ENCODE measurements at regions of chr1 and their contacts with region 1.

Region 1: DNA sequence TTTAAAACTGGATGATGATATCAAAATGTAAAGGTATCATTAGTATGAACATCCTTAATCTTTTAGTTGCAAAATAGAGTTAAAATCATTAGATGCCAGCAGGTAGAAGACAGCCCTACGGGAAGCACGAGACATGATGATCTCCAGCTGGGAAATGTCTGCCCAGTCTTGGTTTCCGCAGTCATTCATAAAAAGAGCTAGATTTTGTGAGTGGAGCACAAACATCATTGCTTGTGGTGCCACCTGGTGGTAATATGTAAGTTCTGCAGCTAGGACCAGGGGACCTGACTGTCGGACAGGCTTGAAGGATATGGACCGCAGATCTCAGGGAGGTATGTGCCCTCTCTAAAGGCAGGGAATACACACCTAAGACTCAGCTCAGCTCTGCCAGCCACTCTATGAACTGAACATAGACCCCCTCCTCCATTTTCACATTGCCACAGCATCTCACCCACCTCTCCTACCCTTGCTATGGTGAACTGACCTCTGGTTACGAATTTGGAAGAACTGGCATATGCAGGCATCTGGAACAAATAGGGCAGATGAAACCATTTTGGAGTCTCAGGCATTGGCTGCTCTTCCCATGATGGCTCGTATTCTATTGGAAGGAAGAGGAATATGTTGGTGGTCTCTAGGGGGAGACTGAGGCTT is 9.2 kb downstream of the FCMR start:
- DNase-seq: peak; percentile 51 to 88
- ATAC-seq: peak; percentile 72 to 80 (median 77)
- H3K4me3 ChIP-seq: no peak overlapping the region
- H3K4me3 Mint-ChIP-seq: peak overlapping the region; percentile 25
- H3K27ac ChIP-seq: peak overlapping the region; percentile 40
- H3K27ac Mint-ChIP-seq: peak overlapping the region in 1 of 2 donors; percentile 77
- H3K4me1 ChIP-seq: peaks cover 73% of the 10 kb centered on the region
- H3K4me1 Mint-ChIP-seq: peaks cover 84% of the 10 kb centered on the region in 2 donors
- H3K27me3 ChIP-seq: no peaks in the 10 kb centered on the region
- H3K27me3 Mint-ChIP-seq: no peaks in the 10 kb centered on the region
- CTCF ChIP-seq: peak; percentile 91

Region 2: DNA sequence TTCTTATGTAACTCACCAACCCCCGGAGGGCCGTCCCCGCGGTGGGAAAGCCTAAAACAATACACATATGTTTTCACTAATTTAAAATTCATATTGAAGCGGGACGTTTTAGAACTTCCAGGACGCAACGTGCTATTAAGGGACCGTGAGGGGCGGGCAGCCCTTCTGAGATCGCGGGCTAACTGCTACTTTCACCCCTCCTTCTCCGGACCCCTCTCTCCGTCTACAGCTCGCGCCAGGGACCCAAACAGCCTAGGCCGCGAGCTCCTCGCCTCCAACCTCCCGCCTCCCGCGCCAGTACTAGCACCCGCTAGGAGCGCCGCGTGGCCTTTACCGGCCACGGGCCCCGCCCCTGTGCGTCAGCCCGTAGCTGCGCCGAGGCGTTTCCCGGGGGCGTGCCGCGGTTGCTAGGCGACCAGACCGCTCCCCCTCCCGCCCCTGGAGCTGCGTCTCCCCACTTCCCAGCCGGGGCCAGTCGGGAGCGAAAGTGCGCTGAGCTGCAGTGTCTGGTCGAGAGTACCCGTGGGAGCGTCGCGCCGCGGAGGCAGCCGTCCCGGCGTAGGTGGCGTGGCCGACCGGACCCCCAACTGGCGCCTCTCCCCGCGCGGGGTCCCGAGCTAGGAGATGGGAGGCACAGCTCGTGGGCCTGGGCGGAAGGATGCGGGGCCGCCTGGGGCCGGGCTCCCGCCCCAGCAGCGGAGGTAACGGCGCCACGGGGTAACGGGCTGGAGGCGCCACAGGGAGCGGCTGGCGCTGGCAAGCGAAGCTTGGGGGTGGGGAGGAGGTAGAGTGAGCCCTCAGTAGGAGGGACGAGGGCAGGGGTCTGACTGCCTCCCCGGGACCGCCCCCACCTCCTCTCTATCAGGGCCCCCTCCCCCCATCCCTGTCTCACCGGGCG is 277.2 kb before region 1 on chr1 and contains the start of gene DYRK3:
- intact Hi-C with region 1: loop called (anchors 10 kb)
- DNase-seq: peak; percentile 78 to 94
- ATAC-seq: peak; percentile 94 to 96 (median 95)
- H3K4me3 ChIP-seq: peak within 1 kb of the TSS; percentile 48
- H3K4me3 Mint-ChIP-seq: peak within 1 kb of the TSS; percentile 92
- H3K27ac ChIP-seq: no peak within 1 kb of the TSS
- H3K27ac Mint-ChIP-seq: peak within 1 kb of the TSS; percentile 56 to 79
- H3K4me1 ChIP-seq: peaks cover 17% of the 10 kb centered on the region
- H3K4me1 Mint-ChIP-seq: peaks cover 10 to 21% of the 10 kb centered on the region in 2 donors
- H3K27me3 ChIP-seq: peaks cover 8% of the 10 kb centered on the region
- H3K27me3 Mint-ChIP-seq: peaks cover 20 to 31% of the 10 kb centered on the region in 2 donors
- CTCF ChIP-seq: no peak
- total RNA-seq, gene DYRK3: 0.16 to 0.66 (median 0.43) TPM

Region 3: DNA sequence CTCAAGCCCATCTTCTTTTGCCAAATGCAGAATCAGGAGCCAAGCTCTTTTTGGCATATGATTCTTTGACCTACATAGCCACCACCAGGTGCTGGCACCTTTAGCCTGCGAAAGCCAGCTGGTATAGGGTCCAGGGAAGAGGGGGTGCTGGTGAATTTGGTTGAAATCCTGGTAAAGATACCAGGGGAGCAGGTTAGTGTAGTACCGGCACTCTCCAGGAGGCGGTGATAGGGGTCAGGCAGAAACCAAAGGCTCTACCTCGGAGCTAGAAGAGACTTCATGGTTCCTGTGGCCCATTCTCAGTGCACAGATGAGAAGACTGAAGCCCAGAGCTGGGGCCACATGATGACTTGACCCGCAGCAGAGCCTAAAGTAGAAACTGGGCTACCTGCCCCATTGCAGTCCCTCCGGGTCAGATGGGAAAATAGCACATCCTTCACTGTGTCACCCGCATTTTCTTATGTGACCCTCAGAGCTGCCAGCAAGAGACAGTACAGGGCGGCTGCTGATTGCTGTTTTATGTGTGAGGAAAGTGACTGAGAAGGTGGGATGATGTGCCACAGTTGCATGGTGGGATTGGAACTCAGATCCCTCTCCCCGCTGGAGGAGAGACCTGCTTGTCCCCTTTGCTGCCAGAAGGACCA is 177.9 kb before region 1 on chr1:
- intact Hi-C with region 1: loop called (anchors 1 kb)
- DNase-seq: peak; percentile 74 to 90
- ATAC-seq: peak; percentile 49 to 63 (median 63)
- H3K4me3 ChIP-seq: no peak overlapping the region
- H3K4me3 Mint-ChIP-seq: peak overlapping the region; percentile 17
- H3K27ac ChIP-seq: no peak overlapping the region
- H3K27ac Mint-ChIP-seq: peak overlapping the region; percentile 66 to 92
- H3K4me1 ChIP-seq: peaks cover 66% of the 10 kb centered on the region
- H3K4me1 Mint-ChIP-seq: peaks cover 63 to 68% of the 10 kb centered on the region in 2 donors
- H3K27me3 ChIP-seq: no peaks in the 10 kb centered on the region
- H3K27me3 Mint-ChIP-seq: no peaks in the 10 kb centered on the region
- CTCF ChIP-seq: peak; percentile 84

Region 4: DNA sequence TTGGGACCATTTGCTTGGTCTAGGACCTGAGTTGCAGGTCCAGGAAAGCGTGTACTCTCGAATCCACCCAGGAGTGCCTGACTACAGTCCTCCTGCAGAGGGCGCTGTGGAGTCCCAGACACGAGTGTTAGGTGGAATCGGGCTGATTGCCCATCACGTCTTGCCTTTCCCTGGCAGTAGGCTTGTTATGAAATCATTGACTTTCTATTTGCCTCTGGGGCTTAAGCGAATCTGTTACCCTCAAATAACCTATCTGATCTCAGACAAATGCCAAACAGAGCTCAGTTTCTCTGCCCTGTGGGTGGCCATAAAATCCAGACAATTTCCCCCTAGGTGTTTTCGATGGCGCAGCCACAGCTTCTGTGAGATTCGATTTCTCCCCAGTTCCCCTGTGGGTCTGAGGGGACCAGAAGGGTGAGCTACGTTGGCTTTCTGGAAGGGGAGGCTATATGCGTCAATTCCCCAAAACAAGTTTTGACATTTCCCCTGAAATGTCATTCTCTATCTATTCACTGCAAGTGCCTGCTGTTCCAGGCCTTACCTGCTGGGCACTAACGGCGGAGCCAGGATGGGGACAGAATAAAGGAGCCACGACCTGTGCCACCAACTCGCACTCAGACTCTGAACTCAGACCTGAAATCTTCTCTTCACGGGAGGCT is 47.4 kb before region 1 on chr1 and contains the start of gene IL20:
- intact Hi-C with region 1: loop called (anchors 1 kb)
- DNase-seq: peak; percentile 79 to 93
- ATAC-seq: peak; percentile 84 to 96 (median 95)
- H3K4me3 ChIP-seq: no peak within 1 kb of the TSS
- H3K4me3 Mint-ChIP-seq: no peak within 1 kb of the TSS
- H3K27ac ChIP-seq: no peak within 1 kb of the TSS
- H3K27ac Mint-ChIP-seq: no peak within 1 kb of the TSS
- H3K4me1 ChIP-seq: no peaks in the 10 kb centered on the region
- H3K4me1 Mint-ChIP-seq: peaks cover 0 to 6% of the 10 kb centered on the region in 2 donors
- H3K27me3 ChIP-seq: no peaks in the 10 kb centered on the region
- H3K27me3 Mint-ChIP-seq: peaks cover 23 to 47% of the 10 kb centered on the region in 2 donors
- CTCF ChIP-seq: peak; percentile 94
- total RNA-seq, gene IL20: not detected

Region 5: DNA sequence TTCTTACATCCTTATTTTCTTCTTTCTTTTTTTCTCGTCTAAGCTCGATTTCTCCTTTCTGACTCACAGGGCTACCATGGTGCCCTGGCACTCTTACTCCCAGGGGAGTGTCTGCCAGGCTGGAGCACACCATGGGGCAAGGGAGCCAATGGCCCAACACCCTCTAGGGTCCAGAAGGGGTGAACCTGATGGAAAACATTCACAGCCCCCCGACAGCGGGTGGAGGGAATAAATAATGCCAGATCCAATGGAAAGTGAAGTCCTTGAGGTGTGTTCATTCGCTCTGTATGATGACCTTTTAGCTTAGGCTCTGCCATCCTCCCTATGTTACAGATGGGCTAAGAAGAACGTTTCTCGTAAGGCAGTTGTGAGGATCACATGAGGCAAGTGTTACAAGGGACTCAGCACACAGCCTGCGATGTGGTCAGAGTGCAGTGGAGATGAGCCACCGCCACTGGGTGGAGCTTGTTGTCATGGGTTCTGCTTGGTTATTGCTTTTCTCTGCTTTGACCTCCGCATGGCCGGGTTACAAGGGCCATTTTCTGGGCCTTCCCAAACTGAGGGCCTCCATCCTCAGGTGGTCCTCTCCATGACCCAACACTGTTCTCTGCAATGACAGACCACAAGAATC is 12.7 kb after region 1 on chr1:
- intact Hi-C with region 1: loop called (anchors 2 kb)
- DNase-seq: peak; percentile 80 to 84
- ATAC-seq: peak; percentile 68 to 86 (median 85)
- H3K4me3 ChIP-seq: no peak overlapping the region
- H3K4me3 Mint-ChIP-seq: no peak overlapping the region
- H3K27ac ChIP-seq: peak overlapping the region; percentile 93
- H3K27ac Mint-ChIP-seq: no peak overlapping the region
- H3K4me1 ChIP-seq: peaks cover 78% of the 10 kb centered on the region
- H3K4me1 Mint-ChIP-seq: peaks cover 9 to 17% of the 10 kb centered on the region in 2 donors
- H3K27me3 ChIP-seq: no peaks in the 10 kb centered on the region
- H3K27me3 Mint-ChIP-seq: no peaks in the 10 kb centered on the region
- CTCF ChIP-seq: no peak

Region 6: GRCh38 chr1:206955476-206956451 is 43.2 kb after region 1 on chr1:
- intact Hi-C with region 1: no loop called
- DNase-seq: no peak
- ATAC-seq: no peak
- H3K4me3 ChIP-seq: no peak overlapping the region
- H3K4me3 Mint-ChIP-seq: no peak overlapping the region
- H3K27ac ChIP-seq: no peak overlapping the region
- H3K27ac Mint-ChIP-seq: no peak overlapping the region
- H3K4me1 ChIP-seq: no peaks in the 10 kb centered on the region
- H3K4me1 Mint-ChIP-seq: no peaks in the 10 kb centered on the region
- H3K27me3 ChIP-seq: no peaks in the 10 kb centered on the region
- H3K27me3 Mint-ChIP-seq: no peaks in the 10 kb centered on the region
- CTCF ChIP-seq: no peak